Activated T-helper 1 cell treated with anti-CD3 and anti-CD28 coated beads, Interleukin-12 subunit alpha, Interleukin-12 subunit beta, Interleukin-2, Interleukin-4 antibody, amounts not matched to agents 30 ng/mL and 10 ng/mL and 1 ng/mL, durations not matched to agents 14 hours and 24 hours and 36 hours (primary cell): ENCODE measurements at regions of chr2 and their contacts with region 1.

Region 1: DNA sequence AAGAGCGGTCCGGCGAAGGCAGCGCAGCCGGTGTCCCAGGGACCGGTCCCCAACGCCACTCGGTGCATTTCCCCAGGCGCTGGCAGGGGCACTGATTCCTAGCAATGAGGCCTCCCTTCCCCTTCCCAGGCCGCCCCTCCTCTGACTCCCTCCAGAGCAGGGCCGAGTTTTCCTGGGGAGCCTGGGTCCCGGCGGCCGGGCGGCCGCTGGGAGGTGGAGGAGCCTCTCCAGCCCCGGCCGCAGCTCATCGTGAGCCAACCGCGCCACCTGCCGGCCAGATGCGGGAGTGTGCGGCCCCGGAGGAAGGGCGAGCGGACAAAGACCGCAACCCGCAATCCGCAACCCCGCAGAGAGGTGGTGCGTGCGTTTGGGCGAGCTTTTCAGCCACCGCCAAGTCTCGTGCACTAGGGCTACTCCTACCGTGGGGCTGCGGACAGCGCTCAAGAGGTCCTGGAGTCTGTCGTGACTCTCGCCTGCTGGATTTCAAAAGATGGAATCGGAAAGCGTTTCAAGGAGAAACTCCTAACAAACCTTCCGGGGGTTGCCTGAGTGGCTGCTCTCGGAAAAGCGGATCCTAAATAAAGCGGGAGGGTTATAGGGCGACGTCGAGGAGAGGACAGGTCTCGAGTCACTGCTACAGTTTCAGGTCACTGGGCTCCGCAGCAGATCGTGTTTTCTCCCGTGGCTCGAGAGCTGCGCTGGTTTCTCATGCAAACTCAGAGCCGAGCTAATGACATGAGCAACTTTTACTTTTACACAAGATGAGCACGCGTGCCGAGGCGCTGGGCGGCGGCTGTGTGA is 1.5 kb upstream of the EPHA4 start:
- DNase-seq: peak; percentile 78
- H3K4me3 Mint-ChIP-seq: peak overlapping the region; percentile 67
- H3K27ac Mint-ChIP-seq: no peak overlapping the region
- H3K4me1 Mint-ChIP-seq: peaks cover 33% of the 10 kb centered on the region
- H3K27me3 Mint-ChIP-seq: peaks cover 58% of the 10 kb centered on the region

Region 2: GRCh38 chr2:220687231-220687843 is 886.3 kb before region 1 on chr2:
- intact Hi-C with region 1: loop called (anchors 1 kb)
- DNase-seq: peak; percentile 30
- H3K4me3 Mint-ChIP-seq: no peak overlapping the region
- H3K27ac Mint-ChIP-seq: no peak overlapping the region
- H3K4me1 Mint-ChIP-seq: no peaks in the 10 kb centered on the region
- H3K27me3 Mint-ChIP-seq: peaks cover 5% of the 10 kb centered on the region

Region 3: GRCh38 chr2:221134718-221135117 is 438.9 kb before region 1 on chr2:
- intact Hi-C with region 1: loop called (anchors 10 kb)
- DNase-seq: no peak
- H3K4me3 Mint-ChIP-seq: no peak overlapping the region
- H3K27ac Mint-ChIP-seq: no peak overlapping the region
- H3K4me1 Mint-ChIP-seq: no peaks in the 10 kb centered on the region
- H3K27me3 Mint-ChIP-seq: peaks cover 2% of the 10 kb centered on the region

Region 4: DNA sequence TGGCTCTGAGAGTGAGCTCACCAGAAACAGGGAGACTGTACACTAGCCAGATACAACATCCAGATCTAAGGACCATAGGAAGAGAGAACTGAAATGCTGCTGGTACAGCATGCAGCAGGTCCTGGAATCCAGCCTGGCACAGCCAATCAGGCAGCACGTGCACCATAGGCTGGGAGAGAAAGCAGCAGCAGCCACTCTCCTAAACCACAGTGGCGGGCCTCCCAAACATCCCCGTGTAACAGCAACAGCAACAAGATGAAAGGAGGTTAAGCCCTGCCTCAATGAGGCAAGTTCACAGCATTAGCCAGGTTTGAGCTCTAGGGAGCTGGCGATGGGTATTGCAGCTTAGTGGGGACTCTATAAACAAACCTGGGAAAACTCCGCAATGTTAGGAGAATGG is 193.6 kb before region 1 on chr2:
- intact Hi-C with region 1: loop called (anchors 5 kb)
- DNase-seq: no peak
- H3K4me3 Mint-ChIP-seq: no peak overlapping the region
- H3K27ac Mint-ChIP-seq: no peak overlapping the region
- H3K4me1 Mint-ChIP-seq: no peaks in the 10 kb centered on the region
- H3K27me3 Mint-ChIP-seq: peaks cover 2% of the 10 kb centered on the region

Region 5: GRCh38 chr2:221517696-221518151 is 55.9 kb before region 1 on chr2:
- intact Hi-C with region 1: loop called (anchors 1 kb)
- DNase-seq: peak; percentile 76
- H3K4me3 Mint-ChIP-seq: no peak overlapping the region
- H3K27ac Mint-ChIP-seq: no peak overlapping the region
- H3K4me1 Mint-ChIP-seq: peaks cover 5% of the 10 kb centered on the region
- H3K27me3 Mint-ChIP-seq: peaks cover 5% of the 10 kb centered on the region

Region 6: DNA sequence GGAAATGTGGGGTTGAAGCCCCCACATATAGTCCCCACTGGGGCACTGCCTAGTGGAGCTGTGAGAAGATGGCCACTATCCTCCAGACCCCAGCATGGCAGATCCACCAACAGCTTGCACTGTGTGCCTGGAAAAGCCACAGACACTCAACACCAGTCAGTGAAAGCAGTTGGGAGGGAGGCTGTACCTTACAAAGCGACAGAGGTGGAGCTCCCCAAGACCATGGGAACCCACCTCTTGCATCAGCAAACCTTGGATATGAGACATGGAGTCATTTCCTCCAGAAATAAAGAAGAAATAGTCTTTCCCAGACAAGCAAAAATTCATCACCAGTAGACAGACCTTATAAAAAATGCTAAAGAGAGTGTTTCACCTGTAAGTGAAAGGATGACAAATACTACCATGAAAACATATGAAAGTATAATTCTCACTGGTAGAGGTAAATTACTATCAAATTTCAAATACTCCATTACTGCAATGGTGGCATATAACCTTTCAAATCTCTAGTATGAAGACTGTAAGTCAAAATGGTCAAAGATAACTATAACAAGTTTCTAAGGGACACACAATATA is 151.1 kb after region 1 on chr2:
- intact Hi-C with region 1: loop called (anchors 5 kb)
- DNase-seq: no peak
- H3K4me3 Mint-ChIP-seq: no peak overlapping the region
- H3K27ac Mint-ChIP-seq: no peak overlapping the region
- H3K4me1 Mint-ChIP-seq: no peaks in the 10 kb centered on the region
- H3K27me3 Mint-ChIP-seq: no peaks in the 10 kb centered on the region